ENCODE measurements at regions of chr14 and their contacts with region 1.

Region 1: GRCh38 chr14:49786315-49787110 is 18.6 kb downstream of the KLHDC2 start:
- DNase-seq: no peak
- H3K4me3 ChIP-seq: no peak overlapping the region
- H3K27ac ChIP-seq: no peak overlapping the region
- H3K4me1 ChIP-seq: no peaks in the 10 kb centered on the region
- H3K27me3 ChIP-seq: no peaks in the 10 kb centered on the region
- CTCF ChIP-seq: no peak

Region 2: GRCh38 chr14:49828640-49829039 is 42.1 kb after region 1 on chr14:
- intact Hi-C with region 1: loop called (anchors 10 kb)
- DNase-seq: no peak
- H3K4me3 ChIP-seq: no peak overlapping the region
- H3K27ac ChIP-seq: no peak overlapping the region
- H3K4me1 ChIP-seq: no peaks in the 10 kb centered on the region
- H3K27me3 ChIP-seq: no peaks in the 10 kb centered on the region
- CTCF ChIP-seq: no peak

Measured in left ventricle myocardium inferior (tissue), 1 donor.